Psoas muscle (tissue), 8 donors: ENCODE measurements at regions of chr12 and their contacts with region 1.

Region 1: GRCh38 chr12:105382771-105383622 is 52.5 kb downstream of the C12orf75 start:
- DNase-seq: no peak
- ATAC-seq: peak; percentile 74 to 91 (median 81)
- H3K4me3 ChIP-seq: peak overlapping the region; percentile 49
- H3K27ac ChIP-seq: no peak overlapping the region
- H3K4me1 ChIP-seq: no peaks in the 10 kb centered on the region
- H3K27me3 ChIP-seq: no peaks in the 10 kb centered on the region
- CTCF ChIP-seq: peak; percentile 81

Region 2: DNA sequence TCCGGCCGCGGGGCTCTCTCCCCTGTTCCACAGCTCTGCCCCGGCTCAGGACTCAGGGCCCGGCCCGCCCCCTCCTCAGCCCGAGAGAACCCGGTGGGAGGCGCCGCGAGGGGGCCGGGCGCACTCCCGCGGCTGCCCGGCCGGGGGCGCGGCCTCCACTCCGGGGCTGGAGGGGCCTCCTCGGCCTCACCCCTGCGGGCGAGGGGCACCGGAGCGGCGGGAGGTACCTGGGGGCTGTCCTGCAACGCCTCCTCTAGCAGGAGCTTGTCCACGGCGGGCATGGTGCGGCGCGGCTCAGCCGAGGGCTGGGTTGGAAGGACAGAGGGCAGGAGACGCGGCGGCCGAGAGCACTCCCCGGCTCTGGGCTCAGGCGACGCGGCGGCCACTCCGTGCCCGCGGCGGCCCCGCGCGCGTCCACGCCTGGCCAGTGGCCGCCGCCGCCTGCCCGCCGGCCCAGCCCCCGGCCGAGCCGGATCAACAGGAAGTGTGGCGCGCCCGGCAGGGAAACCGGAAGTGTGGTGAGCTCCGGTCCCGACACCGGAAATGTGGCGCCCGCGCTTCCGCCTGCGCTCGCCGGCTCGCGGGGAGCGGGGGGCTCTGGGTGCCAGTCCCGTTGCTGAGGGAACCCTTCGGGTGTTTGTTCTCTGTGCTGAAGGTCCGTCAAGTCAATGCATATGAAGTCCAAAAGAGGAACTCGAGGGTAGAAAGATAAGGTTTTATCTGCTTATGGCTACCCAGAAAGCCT is 147.1 kb before region 1 on chr12 and contains the start of gene APPL2:
- intact Hi-C with region 1: loop called in 1 of 2 experiments (anchors 5 kb)
- DNase-seq: peak; percentile 94 to 97
- ATAC-seq: peak; percentile 96
- H3K4me3 ChIP-seq: peak within 1 kb of the TSS; percentile 97
- H3K27ac ChIP-seq: peak within 1 kb of the TSS; percentile 99
- H3K4me1 ChIP-seq: peaks cover 45% of the 10 kb centered on the region
- H3K27me3 ChIP-seq: no peaks in the 10 kb centered on the region
- CTCF ChIP-seq: peak; percentile 40
- total RNA-seq, gene APPL2: 9.7 to 14.8 (median 11.6) TPM

Region 3: DNA sequence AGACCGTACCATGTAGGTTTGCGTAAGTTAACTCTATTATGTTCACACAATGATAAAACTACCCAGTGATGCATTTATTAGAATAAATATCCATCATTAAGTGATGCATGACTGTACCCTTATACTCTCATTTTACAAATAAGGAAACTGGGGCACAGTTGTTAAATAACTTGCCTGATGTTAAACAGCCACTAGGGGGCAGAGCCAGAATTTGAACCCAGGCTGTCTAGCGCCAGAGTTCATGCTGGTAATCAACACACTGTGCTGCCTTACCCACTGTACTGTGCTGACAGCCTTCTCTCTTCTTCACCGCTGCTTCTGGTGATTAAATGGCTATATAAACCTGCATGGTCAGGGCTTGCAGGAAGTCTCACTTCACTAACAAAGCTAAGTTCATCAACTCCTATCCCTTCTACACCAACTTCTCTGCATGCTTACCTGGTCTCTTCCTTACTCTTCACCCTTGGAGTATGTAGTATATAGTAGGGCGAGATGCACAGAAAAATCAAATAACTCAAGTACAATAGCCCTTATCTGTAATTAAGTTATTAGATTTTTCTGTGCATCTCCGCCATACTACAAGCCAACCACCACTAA is 103.4 kb before region 1 on chr12:
- intact Hi-C with region 1: loop called (anchors 2 to 5 kb)
- DNase-seq: no peak
- ATAC-seq: peak; percentile 63 to 71 (median 68)
- H3K4me3 ChIP-seq: no peak overlapping the region
- H3K27ac ChIP-seq: no peak overlapping the region
- H3K4me1 ChIP-seq: no peaks in the 10 kb centered on the region
- H3K27me3 ChIP-seq: peaks cover 0 to 3% (median 0%) of the 10 kb centered on the region in 3 donors
- CTCF ChIP-seq: peak; percentile 69

Region 4: GRCh38 chr12:105330283-105330930 is 52.6 kb before region 1 on chr12 and contains the start of gene C12orf75:
- intact Hi-C with region 1: loop called in 1 of 2 experiments (anchors 5 kb)
- DNase-seq: peak; percentile 73 to 76
- ATAC-seq: peak; percentile 79 to 88 (median 86)
- H3K4me3 ChIP-seq: peak within 1 kb of the TSS; percentile 82
- H3K27ac ChIP-seq: peak within 1 kb of the TSS; percentile 36
- H3K4me1 ChIP-seq: peaks cover 12% of the 10 kb centered on the region
- H3K27me3 ChIP-seq: no peaks in the 10 kb centered on the region
- CTCF ChIP-seq: no peak
- total RNA-seq, gene C12orf75: 31.1 to 228 (median 146) TPM

Region 5: DNA sequence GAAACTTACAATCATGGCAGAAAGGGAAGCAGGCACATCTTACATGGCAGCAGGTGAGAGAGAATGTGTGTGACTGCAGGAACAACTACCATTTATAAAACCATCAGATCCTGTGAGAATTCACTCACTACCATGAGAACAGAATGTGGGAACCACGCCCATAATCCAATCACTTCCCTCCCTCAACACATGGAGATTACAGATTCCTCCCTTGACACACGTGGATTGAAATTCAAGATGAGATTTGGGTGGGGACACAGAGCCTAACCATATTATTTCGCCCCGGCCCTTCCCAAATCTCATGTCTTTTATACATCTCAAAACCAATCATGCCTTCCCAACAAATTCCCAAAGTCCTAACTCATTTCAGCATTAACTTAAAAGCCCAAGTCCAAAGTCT is 151.1 kb after region 1 on chr12:
- intact Hi-C with region 1: no loop called
- DNase-seq: no peak
- ATAC-seq: no peak
- H3K4me3 ChIP-seq: no peak overlapping the region
- H3K27ac ChIP-seq: no peak overlapping the region
- H3K4me1 ChIP-seq: peaks cover 5% of the 10 kb centered on the region
- H3K27me3 ChIP-seq: no peaks in the 10 kb centered on the region
- CTCF ChIP-seq: no peak